ENCODE measurements at regions of chr5 and their contacts with region 1.

Region 1: GRCh38 chr5:141040771-141041426 is 10.3 kb upstream of the PCDHB1 start:
- DNase-seq: peak; percentile 99
- H3K27ac ChIP-seq: peak overlapping the region; percentile 32; the same call in 1 of the 2 replicates
- CTCF ChIP-seq: peak; percentile 86

Region 2: DNA sequence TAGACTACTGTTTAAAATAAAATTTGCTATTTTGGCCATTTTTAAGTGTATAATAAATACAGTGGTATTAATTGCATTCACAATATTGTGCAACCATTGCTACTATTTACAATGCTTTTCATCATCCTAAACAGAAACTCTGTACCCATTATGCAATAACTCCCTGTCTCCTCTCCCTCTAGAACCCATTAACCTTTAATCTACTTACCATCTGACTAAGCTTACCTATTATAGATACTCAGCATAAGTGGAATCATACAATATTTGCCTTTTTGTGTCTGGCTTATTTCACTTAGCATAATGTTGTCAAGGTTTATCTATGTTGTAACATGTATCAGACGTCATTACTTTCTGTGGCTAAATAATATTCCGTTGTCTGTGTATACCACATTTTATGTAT is 433.9 kb before region 1 on chr5:
- CTCF ChIA-PET with region 1: no interaction called
- POLR2A ChIA-PET with region 1: no interaction called
- DNase-seq: no peak
- H3K27ac ChIP-seq: no peak overlapping the region
- CTCF ChIP-seq: no peak

Region 3: DNA sequence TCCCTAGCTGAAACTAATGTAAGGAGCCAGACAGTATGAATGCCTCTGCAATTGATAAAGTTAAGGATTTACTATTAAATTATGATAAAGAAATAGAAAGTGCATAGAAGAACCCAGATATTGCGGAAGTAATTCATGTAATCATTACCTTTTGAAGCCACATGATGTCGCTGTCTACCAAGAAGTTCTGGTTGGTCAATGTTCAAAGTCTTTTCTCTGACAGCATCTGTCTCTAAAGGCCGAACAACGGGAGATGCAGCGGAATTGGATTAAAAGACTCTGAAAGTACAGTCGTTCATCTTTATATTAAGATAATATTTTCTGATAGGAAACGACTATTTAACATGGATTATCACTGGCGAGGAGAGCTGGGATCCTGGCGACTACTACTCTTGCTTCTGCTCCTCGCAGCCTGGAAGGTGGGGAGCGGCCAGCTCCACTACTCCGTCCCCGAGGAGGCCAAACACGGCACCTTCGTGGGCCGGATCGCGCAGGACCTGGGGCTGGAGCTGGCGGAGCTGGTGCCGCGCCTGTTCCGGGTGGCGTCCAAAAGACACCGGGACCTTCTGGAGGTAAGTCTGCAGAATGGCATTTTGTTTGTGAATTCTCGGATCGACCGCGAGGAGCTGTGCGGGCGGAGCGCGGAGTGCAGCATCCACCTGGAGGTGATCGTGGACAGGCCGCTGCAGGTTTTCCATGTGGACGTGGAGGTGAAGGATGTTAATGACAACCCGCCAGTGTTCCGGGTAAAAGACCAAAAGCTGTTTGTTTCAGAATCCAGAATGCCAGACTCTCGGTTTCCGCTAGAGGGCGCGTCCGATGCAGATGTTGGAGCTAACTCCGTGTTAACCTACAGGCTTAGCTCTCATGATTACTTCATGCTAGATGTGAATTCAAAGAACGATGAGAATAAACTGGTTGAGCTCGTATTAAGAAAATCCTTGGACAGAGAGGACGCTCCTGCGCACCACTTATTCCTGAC is 199.6 kb before region 1 on chr5 and contains the start of gene PCDHA8:
- CTCF ChIA-PET with region 1: interaction called, 56 read pairs
- POLR2A ChIA-PET with region 1: interaction called, 6 read pairs
- DNase-seq: peak; percentile 73
- H3K27ac ChIP-seq: no peak within 1 kb of the TSS
- CTCF ChIP-seq: peak; percentile 85

Region 4: GRCh38 chr5:140868721-140869554 is 172.0 kb before region 1 on chr5 and contains the start of gene PCDHA11:
- CTCF ChIA-PET with region 1: interaction called, 27 read pairs
- POLR2A ChIA-PET with region 1: interaction called, 3 read pairs
- DNase-seq: peak; percentile 40
- H3K27ac ChIP-seq: no peak within 1 kb of the TSS
- CTCF ChIP-seq: peak; percentile 56

Region 5: DNA sequence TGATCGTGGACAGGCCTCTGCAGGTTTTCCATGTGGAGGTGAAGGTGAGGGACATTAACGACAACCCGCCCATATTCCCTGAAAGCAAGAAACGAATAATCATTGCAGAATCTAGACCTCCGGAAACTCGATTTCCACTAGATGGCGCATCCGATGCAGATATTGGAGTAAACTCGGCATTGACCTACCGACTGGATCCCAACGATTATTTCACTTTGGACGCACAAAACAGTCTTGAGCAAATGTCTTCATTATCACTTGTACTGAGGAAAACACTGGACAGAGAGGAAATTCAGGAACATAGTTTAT is 158.4 kb before region 1 on chr5:
- CTCF ChIA-PET with region 1: interaction called, 50 read pairs
- POLR2A ChIA-PET with region 1: no interaction called
- DNase-seq: peak; percentile 62
- H3K27ac ChIP-seq: no peak overlapping the region
- CTCF ChIP-seq: no peak

Region 6: GRCh38 chr5:140966293-140967225 is 74.3 kb before region 1 on chr5 and contains the start of gene PCDHAC2:
- CTCF ChIA-PET with region 1: interaction called, 27 read pairs
- POLR2A ChIA-PET with region 1: interaction called, 3 read pairs
- DNase-seq: peak; percentile 62
- H3K27ac ChIP-seq: peak within 1 kb of the TSS; percentile 87
- CTCF ChIP-seq: no peak